ENCODE measurements at regions of chr1 and their contacts with region 1.

Region 1: DNA sequence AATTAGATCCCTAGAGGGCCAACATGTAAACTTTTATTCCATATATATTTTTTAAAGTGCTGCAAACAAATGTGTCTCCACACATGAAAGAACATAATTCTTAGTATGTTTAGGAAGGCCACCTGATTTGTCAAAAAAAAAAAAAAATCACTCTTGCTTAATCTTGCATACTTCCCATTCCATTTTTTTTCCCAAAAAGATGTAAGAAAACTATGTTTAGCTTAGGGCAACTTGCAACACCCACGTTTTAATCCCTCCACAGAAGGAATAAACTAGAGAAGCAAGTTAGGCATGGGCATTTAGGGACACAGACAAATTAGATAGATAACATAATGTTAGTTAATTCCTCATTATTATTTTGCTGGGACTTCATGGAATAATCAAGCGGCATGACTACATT is 5.5 kb downstream of the YOD1 start:
- DNase-seq: no peak
- H3K4me3 ChIP-seq: no peak overlapping the region
- H3K27ac ChIP-seq: no peak overlapping the region
- H3K4me1 ChIP-seq: peaks cover 0 to 2% (median 0%) of the 10 kb centered on the region in 4 experiments; a peak in 2 of 7 replicates
- H3K27me3 ChIP-seq: no peaks in the 10 kb centered on the region
- CTCF ChIP-seq: no peak
- EP300 ChIP-seq: no peak
- POLR2A ChIP-seq: no peak
- RAD21 ChIP-seq: no peak

Region 2: DNA sequence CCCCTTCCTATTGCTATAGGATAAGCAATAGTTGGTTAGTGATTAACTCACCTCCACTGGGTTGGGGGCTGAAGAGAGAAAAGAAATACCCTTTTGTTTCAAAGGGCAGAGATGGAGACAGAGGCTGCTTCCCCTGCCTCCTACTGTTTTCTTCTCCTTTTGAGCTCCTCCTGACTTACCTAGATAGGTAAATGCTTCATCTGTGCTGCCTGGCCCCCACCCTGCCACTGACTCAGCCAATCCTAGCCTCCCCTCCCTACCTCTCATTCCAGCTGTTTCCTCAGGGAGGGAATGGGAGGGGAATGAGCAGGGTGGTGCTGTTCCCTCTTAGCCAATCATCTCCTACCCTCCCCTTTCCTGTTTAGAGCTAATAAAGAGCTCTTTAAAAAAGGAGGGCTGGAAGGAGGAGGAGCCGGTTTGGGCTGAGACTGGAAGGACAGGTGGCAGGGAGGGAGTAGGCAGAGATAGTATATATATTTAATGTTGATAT is 12.9 kb before region 1 on chr1 and contains the start of gene C1orf116:
- CTCF ChIA-PET with region 1: interaction called, 40 read pairs
- POLR2A ChIA-PET with region 1: interaction called, 16 read pairs
- DNase-seq: peak; percentile 65 to 81
- H3K4me3 ChIP-seq: peak within 1 kb of the TSS; percentile 3 to 50 (median 29); a peak in 7 of 8 replicates
- H3K27ac ChIP-seq: peak within 1 kb of the TSS; percentile 55; the same call in 1 of the 2 replicates
- H3K4me1 ChIP-seq: peaks cover 4 to 17% (median 12%) of the 10 kb centered on the region in 4 experiments; a peak in 6 of 7 replicates
- H3K27me3 ChIP-seq: no peaks in the 10 kb centered on the region
- CTCF ChIP-seq: no peak
- EP300 ChIP-seq: no peak
- POLR2A ChIP-seq: peak in 1 of 2 experiments; percentile 55; a peak in 2 of 3 replicates
- RAD21 ChIP-seq: no peak
- total RNA-seq, gene C1orf116: 3.8 and 3.9 TPM in 2 replicates